Left ventricle myocardium inferior (tissue), 1 donor: ENCODE measurements at regions of chr11 and their contacts with region 1.

Region 1: DNA sequence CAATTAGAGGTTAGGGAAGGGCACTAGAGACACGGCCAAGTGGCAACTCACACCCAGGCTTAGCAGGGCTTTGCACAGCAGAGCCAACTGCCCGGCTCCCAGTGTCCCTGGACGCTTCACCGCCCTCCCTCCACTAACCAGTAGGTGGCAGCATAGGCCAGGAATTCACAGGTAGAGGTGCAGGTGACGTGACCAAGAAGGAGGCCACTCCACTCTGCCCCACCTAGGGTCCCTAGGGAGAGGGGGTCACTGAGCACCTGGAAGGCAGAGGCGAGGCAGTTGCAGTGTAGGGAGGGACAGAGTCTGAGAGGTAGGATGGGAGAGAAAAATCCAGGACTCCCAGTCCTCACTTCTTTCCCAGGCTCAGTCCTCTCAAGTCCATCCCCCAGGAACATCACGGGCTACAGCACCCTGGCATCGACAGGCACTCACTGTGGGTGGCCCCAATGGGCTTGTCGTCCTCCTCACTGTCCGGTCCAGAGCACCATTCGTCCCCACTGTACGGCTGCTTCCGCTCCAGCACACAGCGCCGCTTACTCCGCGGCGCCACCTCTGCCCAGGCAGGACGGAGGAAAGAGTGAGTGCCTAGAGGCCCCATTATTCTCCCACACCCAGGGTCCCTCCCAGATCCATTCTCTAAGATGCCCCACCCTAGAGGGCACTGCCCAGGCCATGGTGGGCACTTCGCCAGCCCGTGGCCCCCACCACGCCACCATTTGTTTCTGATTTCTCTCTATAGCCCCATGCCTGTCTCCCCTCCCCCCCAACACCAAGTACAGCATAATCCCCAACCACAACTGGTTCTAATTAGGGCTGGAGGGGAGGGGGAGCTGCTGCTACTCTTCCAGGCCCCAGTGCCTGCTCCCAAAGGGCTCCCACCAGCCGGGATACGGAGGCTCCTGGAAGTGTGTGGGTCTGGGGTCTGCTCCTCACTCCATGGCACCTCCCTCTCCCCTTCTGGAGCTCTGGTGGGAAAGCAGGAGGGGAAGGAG is 18.4 kb downstream of the BCL9L start:
- DNase-seq: peak; percentile 81
- H3K4me3 ChIP-seq: peak overlapping the region; percentile 63
- H3K27ac ChIP-seq: peak overlapping the region; percentile 96
- H3K4me1 ChIP-seq: peaks cover 63% of the 10 kb centered on the region
- H3K27me3 ChIP-seq: no peaks in the 10 kb centered on the region
- CTCF ChIP-seq: peak; percentile 92

Region 2: DNA sequence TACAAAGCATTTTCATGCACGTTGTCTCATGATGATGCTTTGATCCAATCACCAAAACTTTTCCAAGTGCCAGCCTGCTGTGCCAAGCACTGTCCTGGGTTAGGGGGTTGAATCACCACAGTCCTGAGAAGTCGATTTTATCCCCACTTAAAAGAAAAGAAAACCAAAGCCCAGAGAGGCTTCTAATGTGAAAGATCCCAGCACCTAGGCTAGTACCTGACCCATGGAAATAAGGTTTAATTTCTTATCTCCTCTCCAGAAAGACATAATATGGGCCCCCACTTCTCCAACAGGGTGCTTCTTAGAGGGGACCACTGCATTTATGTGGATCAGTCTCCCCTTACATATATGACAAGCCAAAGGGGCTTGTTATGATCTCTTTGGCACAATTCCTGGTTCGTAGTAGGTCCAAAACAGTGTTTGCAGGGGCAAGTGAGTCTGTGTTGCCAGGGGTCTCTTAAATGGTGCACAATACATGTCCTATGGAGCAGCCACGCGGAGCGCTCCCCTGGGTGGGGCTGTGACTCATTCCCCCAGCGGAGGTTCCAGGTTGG is 20.3 kb after region 1 on chr11:
- intact Hi-C with region 1: loop called (anchors 2 kb)
- DNase-seq: no peak
- H3K4me3 ChIP-seq: peak overlapping the region; percentile 90
- H3K27ac ChIP-seq: peak overlapping the region; percentile 100
- H3K4me1 ChIP-seq: peaks cover 74% of the 10 kb centered on the region
- H3K27me3 ChIP-seq: no peaks in the 10 kb centered on the region
- CTCF ChIP-seq: no peak

Region 3: GRCh38 chr11:118956094-118956846 is 48.9 kb after region 1 on chr11 and contains the start of gene UPK2:
- intact Hi-C with region 1: loop called (anchors 10 kb)
- DNase-seq: peak; percentile 84
- H3K4me3 ChIP-seq: no peak within 1 kb of the TSS
- H3K27ac ChIP-seq: no peak within 1 kb of the TSS
- H3K4me1 ChIP-seq: no peaks in the 10 kb centered on the region
- H3K27me3 ChIP-seq: peaks cover 33% of the 10 kb centered on the region
- CTCF ChIP-seq: peak; percentile 97
- total RNA-seq, gene UPK2: not detected